PC-9 (cell line): ENCODE measurements at regions of chr6 and their contacts with region 1.

Region 1: DNA sequence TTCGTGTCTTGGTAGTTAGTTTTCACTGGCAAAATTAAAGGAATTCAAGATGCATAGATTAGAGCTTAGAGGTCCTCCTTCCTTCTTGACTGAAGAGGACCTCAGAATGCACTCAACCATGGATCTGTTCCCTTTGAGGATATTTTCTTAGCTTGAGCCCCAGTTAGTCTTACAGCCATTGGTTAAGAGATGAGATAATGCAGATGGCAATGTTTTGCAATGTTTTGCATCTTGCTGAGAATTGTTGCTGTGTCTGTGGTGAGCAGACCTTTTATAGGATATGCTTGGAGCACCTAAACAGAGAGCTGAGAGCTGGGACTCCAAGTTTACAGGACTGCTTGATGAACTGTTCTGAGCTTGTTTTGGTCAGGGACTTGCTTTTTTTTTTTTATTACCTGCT is 107.5 kb downstream of the TMEM170B start:
- DNase-seq: peak in 1 of 2 experiments; percentile 35
- H3K4me3 ChIP-seq: no peak overlapping the region
- H3K27ac ChIP-seq: no peak overlapping the region
- H3K4me1 ChIP-seq: peaks cover 7% of the 10 kb centered on the region
- H3K27me3 ChIP-seq: no peaks in the 10 kb centered on the region
- CTCF ChIP-seq: no peak

Region 2: GRCh38 chr6:11374036-11375010 is 270.7 kb before region 1 on chr6:
- CTCF ChIA-PET with region 1: no interaction called
- POLR2A ChIA-PET with region 1: no interaction called
- intact Hi-C with region 1: no loop called
- DNase-seq: no peak
- H3K4me3 ChIP-seq: no peak overlapping the region
- H3K27ac ChIP-seq: no peak overlapping the region
- H3K4me1 ChIP-seq: no peaks in the 10 kb centered on the region
- H3K27me3 ChIP-seq: no peaks in the 10 kb centered on the region
- CTCF ChIP-seq: no peak

Region 3: DNA sequence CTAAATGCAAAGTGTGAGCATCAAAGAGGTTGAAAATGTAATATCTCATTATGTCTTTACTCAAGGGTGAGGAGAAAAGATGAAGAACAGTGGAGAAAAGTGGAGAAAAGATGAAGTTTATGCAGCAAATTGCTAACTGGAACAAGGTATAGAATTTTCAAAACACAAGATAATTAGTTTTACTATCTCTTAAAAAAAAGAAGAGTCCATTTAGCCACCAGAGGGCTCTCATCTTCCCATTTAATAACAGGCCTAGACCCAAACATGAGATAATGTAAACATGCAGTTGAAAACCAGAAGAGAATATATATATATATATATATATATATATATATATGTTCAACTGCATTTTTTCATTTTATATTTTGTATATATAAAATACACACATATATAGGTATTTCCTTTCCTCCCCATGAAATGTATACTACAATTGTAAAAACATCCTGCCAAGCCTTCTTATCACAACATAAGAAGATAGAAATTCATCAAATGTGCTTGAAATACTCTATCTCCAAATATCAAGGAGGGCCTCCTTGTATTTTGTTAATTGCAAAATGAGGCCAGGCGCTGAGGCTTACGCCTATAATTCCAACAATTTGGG is 55.2 kb after region 1 on chr6:
- CTCF ChIA-PET with region 1: interaction called, 12 read pairs
- POLR2A ChIA-PET with region 1: no interaction called
- intact Hi-C with region 1: no loop called
- DNase-seq: peak in 1 of 2 experiments; percentile 59
- H3K4me3 ChIP-seq: no peak overlapping the region
- H3K27ac ChIP-seq: no peak overlapping the region
- H3K4me1 ChIP-seq: no peaks in the 10 kb centered on the region
- H3K27me3 ChIP-seq: no peaks in the 10 kb centered on the region
- CTCF ChIP-seq: peak; percentile 73

Region 4: GRCh38 chr6:11722805-11723631 is 78.0 kb after region 1 on chr6:
- CTCF ChIA-PET with region 1: no interaction called
- POLR2A ChIA-PET with region 1: no interaction called
- intact Hi-C with region 1: no loop called
- DNase-seq: no peak
- H3K4me3 ChIP-seq: no peak overlapping the region
- H3K27ac ChIP-seq: no peak overlapping the region
- H3K4me1 ChIP-seq: no peaks in the 10 kb centered on the region
- H3K27me3 ChIP-seq: no peaks in the 10 kb centered on the region
- CTCF ChIP-seq: no peak